ENCODE measurements at regions of chr7 and their contacts with region 1.

Region 1: DNA sequence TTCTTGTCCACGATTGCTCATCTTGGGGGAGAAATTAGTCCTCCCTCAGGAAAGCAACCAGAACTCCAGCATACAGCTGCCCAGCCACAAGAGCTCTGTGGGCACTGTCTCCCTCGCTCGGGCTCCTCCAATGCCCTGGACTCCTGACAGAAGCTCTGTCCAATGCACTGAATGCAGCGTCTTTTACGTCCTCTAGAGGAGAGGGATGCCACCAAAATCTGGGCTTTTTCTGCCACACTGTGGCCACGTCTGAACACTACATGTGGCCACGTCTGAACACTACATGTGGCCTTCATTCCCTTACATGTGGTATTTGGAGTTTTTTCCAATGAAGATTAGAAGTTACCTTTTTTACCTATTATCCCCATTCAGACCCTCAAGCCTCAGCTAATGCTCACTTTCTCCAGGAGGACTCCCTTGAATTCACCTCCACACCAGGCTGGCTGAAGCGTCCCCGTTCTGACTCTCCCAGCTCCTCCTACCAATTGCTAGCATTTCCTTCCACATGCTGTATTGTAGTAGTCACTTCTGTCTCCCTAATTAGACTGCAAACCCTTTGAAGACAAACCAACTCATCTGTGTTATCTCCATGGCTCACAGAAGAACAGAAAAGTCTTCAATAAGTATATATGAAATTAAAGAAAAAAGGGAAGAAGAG is 134.3 kb upstream of the PDE1C start:
- DNase-seq: peak; percentile 21
- ATAC-seq: no peak
- H3K4me3 Mint-ChIP-seq: no peak overlapping the region
- H3K27ac Mint-ChIP-seq: no peak overlapping the region
- H3K4me1 Mint-ChIP-seq: no peaks in the 10 kb centered on the region
- H3K27me3 Mint-ChIP-seq: no peaks in the 10 kb centered on the region
- CTCF ChIP-seq: no peak

Region 2: DNA sequence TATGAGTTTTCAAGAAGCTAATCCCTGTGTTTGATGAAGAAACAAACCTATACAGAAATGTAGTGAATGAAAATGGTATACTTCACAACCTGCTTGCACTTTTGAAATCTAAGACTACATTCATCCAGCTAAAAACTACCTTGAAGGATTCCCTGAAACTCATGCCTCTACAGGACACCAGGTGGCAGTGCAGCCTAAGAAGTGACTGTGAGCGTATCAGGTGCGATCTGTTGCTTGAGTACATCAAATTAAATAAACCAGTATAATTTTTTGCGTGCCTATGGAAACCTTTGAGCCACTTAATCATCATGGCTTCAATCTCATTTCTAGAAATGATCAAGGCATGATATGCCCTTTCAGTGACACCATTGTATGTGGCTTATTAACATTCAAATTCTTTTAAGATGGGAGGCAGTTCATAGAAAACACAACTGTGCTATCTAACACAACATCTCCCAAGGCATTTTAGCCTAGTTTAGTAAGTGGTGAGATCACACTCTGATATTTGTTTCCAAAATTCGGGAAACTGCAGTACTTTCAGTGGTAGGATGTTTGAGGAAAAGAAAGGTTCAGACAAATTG is 460.1 kb before region 1 on chr7:
- CTCF ChIA-PET with region 1: interaction called, 6 read pairs
- POLR2A ChIA-PET with region 1: no interaction called
- intact Hi-C with region 1: loop called (anchors 10 kb)
- DNase-seq: peak; percentile 68
- ATAC-seq: peak; percentile 51
- H3K4me3 Mint-ChIP-seq: no peak overlapping the region
- H3K27ac Mint-ChIP-seq: no peak overlapping the region
- H3K4me1 Mint-ChIP-seq: no peaks in the 10 kb centered on the region
- H3K27me3 Mint-ChIP-seq: peaks cover 3% of the 10 kb centered on the region
- CTCF ChIP-seq: peak; percentile 75

Region 3: GRCh38 chr7:32179567-32179966 is 24.9 kb before region 1 on chr7:
- CTCF ChIA-PET with region 1: no interaction called
- POLR2A ChIA-PET with region 1: no interaction called
- intact Hi-C with region 1: no loop called
- DNase-seq: no peak
- ATAC-seq: no peak
- H3K4me3 Mint-ChIP-seq: no peak overlapping the region
- H3K27ac Mint-ChIP-seq: no peak overlapping the region
- H3K4me1 Mint-ChIP-seq: no peaks in the 10 kb centered on the region
- H3K27me3 Mint-ChIP-seq: no peaks in the 10 kb centered on the region
- CTCF ChIP-seq: no peak